Naive thymus-derived CD4-positive, alpha-beta T cell (primary cell): ENCODE measurements at regions of chr7 and their contacts with region 1.

Region 1: GRCh38 chr7:24611130-24611529 is 37.9 kb downstream of the PALS2 start:
- DNase-seq: no peak
- ATAC-seq: no peak
- H3K4me3 ChIP-seq: no peak overlapping the region
- H3K4me3 Mint-ChIP-seq: no peak overlapping the region
- H3K27ac ChIP-seq: no peak overlapping the region
- H3K27ac Mint-ChIP-seq: no peak overlapping the region
- H3K4me1 ChIP-seq: no peaks in the 10 kb centered on the region
- H3K4me1 Mint-ChIP-seq: peaks cover 6 to 52% (median 38%) of the 10 kb centered on the region in 7 donors
- H3K27me3 ChIP-seq: no peaks in the 10 kb centered on the region
- H3K27me3 Mint-ChIP-seq: no peaks in the 10 kb centered on the region

Region 2: GRCh38 chr7:24595671-24596418 is 15.3 kb before region 1 on chr7:
- CTCF ChIA-PET with region 1: no interaction called
- POLR2A ChIA-PET with region 1: no interaction called
- intact Hi-C with region 1: loop called in 1 of 2 experiments (anchors 2 kb)
- DNase-seq: peak in 1 of 9 donors; percentile 8
- ATAC-seq: peak; percentile 70
- H3K4me3 ChIP-seq: peak overlapping the region; percentile 22
- H3K4me3 Mint-ChIP-seq: no peak overlapping the region
- H3K27ac ChIP-seq: no peak overlapping the region
- H3K27ac Mint-ChIP-seq: no peak overlapping the region
- H3K4me1 ChIP-seq: peaks cover 0 to 5% of the 10 kb centered on the region in 2 donors
- H3K4me1 Mint-ChIP-seq: peaks cover 0 to 16% (median 7%) of the 10 kb centered on the region in 7 donors
- H3K27me3 ChIP-seq: no peaks in the 10 kb centered on the region
- H3K27me3 Mint-ChIP-seq: no peaks in the 10 kb centered on the region

Region 3: DNA sequence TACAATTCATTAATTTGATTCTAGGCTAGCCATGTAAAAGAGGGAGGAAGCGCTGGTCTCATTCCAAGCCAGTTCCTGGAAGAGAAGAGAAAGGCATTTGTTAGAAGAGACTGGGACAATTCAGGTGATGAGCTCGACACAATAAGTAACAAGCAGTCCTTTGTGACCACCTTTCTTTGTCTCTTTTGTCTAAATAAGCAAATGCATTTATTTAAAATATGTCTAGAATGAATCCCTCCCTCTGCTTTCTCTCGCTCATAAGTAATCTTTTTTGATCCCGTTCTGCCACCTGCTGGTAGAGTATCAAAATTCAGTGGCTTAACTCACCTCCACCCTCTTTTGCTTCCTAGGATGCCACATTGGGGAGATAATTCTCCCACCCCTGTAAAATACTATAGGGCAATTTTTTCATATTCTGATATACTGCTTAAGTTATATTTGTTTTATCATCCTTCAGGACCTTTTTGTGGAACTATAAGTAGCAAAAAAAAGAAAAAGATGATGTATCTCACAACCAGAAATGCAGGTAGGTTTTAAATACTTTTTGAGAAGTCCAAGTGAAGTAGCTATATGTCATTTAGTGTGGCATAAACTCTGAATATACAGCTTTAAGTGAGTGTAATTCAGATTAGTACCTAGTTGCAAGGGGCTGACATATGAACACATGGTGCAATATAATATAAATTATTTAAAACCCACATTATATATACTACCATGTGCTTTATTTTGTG is 54.6 kb after region 1 on chr7:
- CTCF ChIA-PET with region 1: no interaction called
- POLR2A ChIA-PET with region 1: no interaction called
- intact Hi-C with region 1: no loop called
- DNase-seq: peak in 8 of 9 donors; percentile 14 to 59 (median 37)
- ATAC-seq: peak; percentile 52
- H3K4me3 ChIP-seq: no peak overlapping the region
- H3K4me3 Mint-ChIP-seq: no peak overlapping the region
- H3K27ac ChIP-seq: no peak overlapping the region
- H3K27ac Mint-ChIP-seq: peak overlapping the region in 1 of 9 donors; percentile 21
- H3K4me1 ChIP-seq: no peaks in the 10 kb centered on the region
- H3K4me1 Mint-ChIP-seq: peaks cover 0 to 4% (median 0%) of the 10 kb centered on the region in 7 donors
- H3K27me3 ChIP-seq: no peaks in the 10 kb centered on the region
- H3K27me3 Mint-ChIP-seq: no peaks in the 10 kb centered on the region

Region 4: DNA sequence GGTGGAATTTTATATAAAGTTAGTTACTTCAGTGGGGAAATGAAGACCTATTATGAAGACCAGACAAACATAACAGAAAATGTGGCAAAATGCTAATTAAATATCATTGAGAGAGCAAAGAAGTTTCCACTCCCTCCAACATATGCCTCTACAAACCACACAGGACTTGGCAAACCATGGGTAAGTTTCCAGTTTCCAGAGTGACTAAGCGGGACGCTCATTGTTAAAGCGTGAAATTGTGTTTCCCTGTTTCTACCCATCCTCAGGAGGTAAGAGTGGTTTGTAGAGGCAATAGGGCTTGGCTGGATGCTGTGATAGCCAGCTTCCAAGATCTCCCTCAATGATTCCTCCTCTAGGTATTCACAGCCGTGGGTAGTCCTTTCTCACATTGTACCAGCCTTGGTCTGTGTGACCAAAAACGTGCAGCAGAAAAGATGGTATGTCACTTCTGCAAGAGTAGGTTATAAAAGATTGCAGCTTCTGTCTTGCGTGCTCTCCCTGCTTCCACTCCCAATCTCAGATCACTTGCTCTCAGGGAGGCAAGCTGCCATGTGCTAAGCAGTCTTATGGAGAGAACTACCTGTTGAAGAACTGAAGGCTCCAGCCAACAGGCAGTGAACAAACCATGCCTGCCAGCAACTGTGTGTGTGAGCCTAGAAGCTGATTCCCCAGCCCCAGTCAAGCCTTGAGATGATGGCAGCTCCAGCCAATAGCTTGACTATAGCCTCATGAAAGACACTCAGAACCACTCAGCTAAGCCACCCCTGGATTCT is 1626.1 kb after region 1 on chr7:
- CTCF ChIA-PET with region 1: no interaction called
- POLR2A ChIA-PET with region 1: no interaction called
- intact Hi-C with region 1: no loop called
- DNase-seq: no peak
- ATAC-seq: no peak
- H3K4me3 ChIP-seq: no peak overlapping the region
- H3K4me3 Mint-ChIP-seq: no peak overlapping the region
- H3K27ac ChIP-seq: no peak overlapping the region
- H3K27ac Mint-ChIP-seq: no peak overlapping the region
- H3K4me1 ChIP-seq: no peaks in the 10 kb centered on the region
- H3K4me1 Mint-ChIP-seq: no peaks in the 10 kb centered on the region
- H3K27me3 ChIP-seq: no peaks in the 10 kb centered on the region
- H3K27me3 Mint-ChIP-seq: peaks cover 0 to 18% (median 0%) of the 10 kb centered on the region in 5 donors